IMR-90 (cell line): ENCODE measurements at regions of chr11 and their contacts with region 1.

Region 1: GRCh38 chr11:2420502-2421225 is 20.1 kb downstream of the TSSC4 start:
- DNase-seq: peak; percentile 59
- ATAC-seq: peak; percentile 97
- H3K4me3 ChIP-seq: no peak overlapping the region
- H3K27ac ChIP-seq: no peak overlapping the region
- H3K4me1 ChIP-seq: no peaks in the 10 kb centered on the region
- H3K27me3 ChIP-seq: peaks cover 9% of the 10 kb centered on the region; the same call in 1 of the 2 replicates
- CTCF ChIP-seq: peak; percentile 97
- POLR2A ChIP-seq: no peak
- RAD21 ChIP-seq: peak; percentile 96

Region 2: DNA sequence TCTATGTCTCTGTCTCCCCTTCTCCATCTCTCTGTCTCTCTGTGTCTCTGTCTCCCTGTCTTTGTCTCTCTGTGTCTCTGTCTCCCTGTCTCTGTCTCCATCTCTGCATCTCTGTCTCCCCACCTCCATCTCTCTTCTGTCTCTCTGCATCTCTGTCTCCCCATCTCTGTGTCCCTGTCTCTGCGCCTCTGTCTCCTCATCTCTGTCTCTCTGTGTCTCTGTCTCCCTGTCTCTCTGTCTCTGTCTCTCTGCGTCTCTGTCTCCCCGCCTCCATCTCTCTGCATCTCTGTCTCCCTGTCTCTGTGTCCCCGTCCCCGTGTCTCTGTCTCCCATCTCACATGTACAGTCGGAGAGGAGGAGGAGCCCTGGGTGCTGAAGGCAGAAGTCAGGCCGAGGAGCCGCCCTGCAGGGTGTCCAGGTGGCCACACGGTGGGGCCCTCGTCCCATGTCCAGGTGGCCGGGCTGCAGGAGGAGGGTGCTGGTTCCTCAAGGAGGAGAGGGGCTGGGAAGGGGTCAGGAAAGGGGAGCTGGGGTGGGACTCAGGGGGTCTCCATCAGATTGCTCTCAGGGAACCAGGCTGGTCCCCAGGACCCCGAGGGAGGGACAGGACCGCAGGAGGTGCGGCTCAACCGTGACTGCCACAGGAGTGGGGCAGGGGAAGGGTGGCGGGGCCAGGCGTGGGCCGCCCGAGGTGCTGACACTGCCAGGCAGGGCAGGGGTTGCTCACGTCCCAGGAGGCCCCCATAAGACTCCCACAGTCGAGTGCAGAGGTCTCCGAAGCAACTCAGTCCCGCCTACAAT is 223.5 kb before region 1 on chr11:
- CTCF ChIA-PET with region 1: no interaction called
- POLR2A ChIA-PET with region 1: no interaction called
- dilution Hi-C with region 1: no loop called
- in situ Hi-C with region 1: loop called (anchors 5 kb)
- intact Hi-C with region 1: loop called (anchors 1 kb)
- DNase-seq: peak; percentile 38
- ATAC-seq: peak; percentile 93
- H3K4me3 ChIP-seq: no peak overlapping the region
- H3K27ac ChIP-seq: no peak overlapping the region
- H3K4me1 ChIP-seq: no peaks in the 10 kb centered on the region
- H3K27me3 ChIP-seq: peaks cover 17% of the 10 kb centered on the region; the same call in 1 of the 2 replicates
- CTCF ChIP-seq: peak; percentile 81
- POLR2A ChIP-seq: no peak
- RAD21 ChIP-seq: peak; percentile 86

Region 3: GRCh38 chr11:2305140-2305840 is 115.4 kb before region 1 on chr11:
- CTCF ChIA-PET with region 1: interaction called, 73 read pairs
- POLR2A ChIA-PET with region 1: interaction called, 8 read pairs
- dilution Hi-C with region 1: no loop called
- in situ Hi-C with region 1: loop called (anchors 5 kb)
- intact Hi-C with region 1: loop called (anchors 1 kb)
- DNase-seq: peak; percentile 58
- ATAC-seq: peak; percentile 82
- H3K4me3 ChIP-seq: no peak overlapping the region
- H3K27ac ChIP-seq: peak overlapping the region; percentile 98
- H3K4me1 ChIP-seq: peaks cover 11% of the 10 kb centered on the region
- H3K27me3 ChIP-seq: no peaks in the 10 kb centered on the region
- CTCF ChIP-seq: peak; percentile 88
- POLR2A ChIP-seq: no peak
- RAD21 ChIP-seq: peak; percentile 94

Region 4: DNA sequence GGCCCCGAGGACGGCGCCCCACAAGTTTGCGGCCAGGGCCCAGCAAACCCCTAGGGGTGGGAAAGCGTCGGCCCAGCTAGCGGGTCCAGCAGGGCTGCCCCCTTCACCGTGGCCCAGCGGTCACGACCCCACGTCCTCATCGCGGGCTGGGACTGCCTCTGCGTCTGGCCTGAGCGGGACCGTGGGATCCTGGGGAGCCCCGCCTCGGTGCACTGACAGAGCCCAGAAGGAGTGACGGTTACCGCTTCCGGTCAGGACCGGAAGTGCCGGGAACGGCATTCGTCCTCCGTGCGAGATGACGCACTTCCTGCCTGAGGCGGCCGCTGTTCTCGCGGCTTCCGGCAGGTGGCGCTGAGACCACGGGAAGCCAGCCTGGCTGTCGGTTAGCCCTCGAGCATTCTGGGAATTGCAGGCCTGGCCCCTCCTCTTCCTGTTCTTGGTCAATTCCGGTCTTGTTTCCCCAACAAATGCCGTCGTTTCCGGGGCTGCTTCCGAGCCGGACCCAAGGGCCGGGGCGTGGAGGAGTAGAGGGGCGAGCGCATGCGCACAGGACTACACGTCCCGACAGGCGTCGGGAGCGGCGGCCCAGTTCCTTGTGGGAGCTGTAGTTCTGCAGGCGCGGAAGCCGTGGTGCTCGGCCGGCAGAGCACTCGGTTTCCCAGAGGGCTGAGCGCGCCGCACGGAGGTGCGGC is 20.4 kb before region 1 on chr11 and contains the start of gene TSSC4:
- CTCF ChIA-PET with region 1: interaction called, 3 read pairs
- POLR2A ChIA-PET with region 1: no interaction called
- dilution Hi-C with region 1: no loop called
- in situ Hi-C with region 1: no loop called
- intact Hi-C with region 1: loop called (anchors 1 kb)
- DNase-seq: peak; percentile 100
- ATAC-seq: peak; percentile 88
- H3K4me3 ChIP-seq: peak within 1 kb of the TSS; percentile 90
- H3K27ac ChIP-seq: peak within 1 kb of the TSS; percentile 69
- H3K4me1 ChIP-seq: peaks cover 9% of the 10 kb centered on the region
- H3K27me3 ChIP-seq: no peaks in the 10 kb centered on the region
- CTCF ChIP-seq: peak; percentile 100
- POLR2A ChIP-seq: peak; percentile 53
- RAD21 ChIP-seq: peak; percentile 65
- total RNA-seq, gene TSSC4: 40.0 and 45.3 TPM in 2 replicates